ENCODE measurements at regions of chr10 and their contacts with region 1.

Region 1: DNA sequence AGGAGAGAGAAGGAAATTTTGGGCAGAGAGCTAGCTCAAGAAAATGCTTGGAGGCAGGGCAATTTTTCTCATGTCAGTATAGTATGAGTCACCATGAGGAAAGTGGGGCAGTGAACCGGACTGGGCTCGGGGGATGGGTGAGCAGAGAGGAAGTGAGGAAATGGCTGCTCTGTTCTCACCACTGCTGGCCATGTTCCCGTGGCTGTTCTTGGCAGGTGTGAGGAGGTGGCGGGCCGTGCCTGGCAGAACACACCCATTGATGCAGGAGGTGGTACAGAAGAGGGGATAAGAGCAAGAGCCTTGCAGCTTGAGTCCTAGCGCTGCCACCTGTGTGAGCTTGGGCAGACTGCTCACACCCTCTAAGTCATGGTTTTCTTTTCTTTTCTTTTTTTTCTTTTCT is 304.4 kb upstream of the LYZL1 start:
- DNase-seq: peak; percentile 96

Region 2: GRCh38 chr10:28906934-28907333 is 77.5 kb before region 1 on chr10:
- intact Hi-C with region 1: loop called in 1 of 2 experiments (anchors 10 kb)
- DNase-seq: no peak

Region 3: GRCh38 chr10:28946479-28946878 is 38.0 kb before region 1 on chr10:
- intact Hi-C with region 1: loop called in 1 of 2 experiments (anchors 5 kb)
- DNase-seq: no peak

Measured in posterior vena cava (tissue), 2 donors.